ENCODE measurements at regions of chr2 and their contacts with region 1.

Region 1: GRCh38 chr2:218406209-218406948 is 6.7 kb downstream of the CTDSP1 start:
- DNase-seq: peak; percentile 87 to 99 (median 96)

Region 2: DNA sequence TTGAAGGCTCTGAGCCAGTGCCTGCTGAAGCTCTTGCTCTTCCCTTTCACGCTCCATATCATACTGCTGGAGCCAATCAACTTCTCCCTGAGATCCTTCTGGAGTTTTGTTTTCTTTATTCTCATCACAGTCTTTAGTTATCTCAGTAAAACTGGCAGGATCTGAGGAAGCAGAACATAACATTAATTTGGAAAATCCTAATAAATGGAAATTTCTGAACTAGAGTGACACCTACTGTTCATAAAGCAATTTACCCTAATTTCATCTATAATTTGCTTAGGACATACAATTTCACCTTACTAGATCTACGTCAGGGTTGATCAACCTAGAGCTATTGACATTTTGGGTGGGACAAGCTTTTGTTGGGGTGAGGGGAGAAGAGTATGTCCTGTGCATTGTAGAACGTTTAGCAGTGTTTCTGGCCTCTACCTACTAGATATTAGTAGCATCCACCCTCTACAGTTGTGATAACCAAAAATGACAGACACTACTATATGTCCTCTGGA is 59.7 kb after region 1 on chr2:
- intact Hi-C with region 1: loop called (anchors 5 kb)
- DNase-seq: no peak